ENCODE measurements at regions of chr12 and their contacts with region 1.

Region 1: GRCh38 chr12:91913651-91914050 is 232.0 kb downstream of the BTG1 start:
- DNase-seq: no peak
- H3K4me3 ChIP-seq: no peak overlapping the region
- H3K27ac ChIP-seq: no peak overlapping the region
- H3K27me3 ChIP-seq: no peaks in the 10 kb centered on the region
- CTCF ChIP-seq: no peak

Region 2: DNA sequence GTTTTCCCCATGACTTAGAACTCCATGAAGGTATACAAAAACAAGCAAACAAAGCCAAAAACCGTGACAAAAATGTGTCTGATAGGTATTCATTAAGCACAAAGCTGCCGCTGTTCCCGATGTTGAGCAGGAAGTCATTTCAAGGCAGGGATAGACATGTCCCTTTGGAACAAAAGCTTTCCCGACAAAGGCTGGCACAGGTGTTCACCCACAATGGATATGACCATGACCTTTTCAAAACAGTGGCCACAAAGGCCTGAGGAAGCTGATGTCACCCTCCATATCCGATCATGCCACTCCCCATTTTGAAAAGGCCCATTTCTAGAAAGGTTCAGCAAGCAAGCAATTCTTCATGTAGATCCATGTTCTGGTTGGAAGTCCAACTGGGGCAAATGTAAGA is 47.1 kb before region 1 on chr12:
- intact Hi-C with region 1: no loop called
- DNase-seq: no peak
- H3K4me3 ChIP-seq: no peak overlapping the region
- H3K27ac ChIP-seq: no peak overlapping the region
- H3K27me3 ChIP-seq: no peaks in the 10 kb centered on the region
- CTCF ChIP-seq: no peak

Region 3: GRCh38 chr12:91899056-91899455 is 14.6 kb before region 1 on chr12:
- intact Hi-C with region 1: loop called in 1 of 2 experiments (anchors 2 kb)
- DNase-seq: no peak
- H3K4me3 ChIP-seq: no peak overlapping the region
- H3K27ac ChIP-seq: no peak overlapping the region
- H3K27me3 ChIP-seq: no peaks in the 10 kb centered on the region
- CTCF ChIP-seq: no peak